H1 (cell line): ENCODE measurements at regions of chr11 and their contacts with region 1.

Region 1: DNA sequence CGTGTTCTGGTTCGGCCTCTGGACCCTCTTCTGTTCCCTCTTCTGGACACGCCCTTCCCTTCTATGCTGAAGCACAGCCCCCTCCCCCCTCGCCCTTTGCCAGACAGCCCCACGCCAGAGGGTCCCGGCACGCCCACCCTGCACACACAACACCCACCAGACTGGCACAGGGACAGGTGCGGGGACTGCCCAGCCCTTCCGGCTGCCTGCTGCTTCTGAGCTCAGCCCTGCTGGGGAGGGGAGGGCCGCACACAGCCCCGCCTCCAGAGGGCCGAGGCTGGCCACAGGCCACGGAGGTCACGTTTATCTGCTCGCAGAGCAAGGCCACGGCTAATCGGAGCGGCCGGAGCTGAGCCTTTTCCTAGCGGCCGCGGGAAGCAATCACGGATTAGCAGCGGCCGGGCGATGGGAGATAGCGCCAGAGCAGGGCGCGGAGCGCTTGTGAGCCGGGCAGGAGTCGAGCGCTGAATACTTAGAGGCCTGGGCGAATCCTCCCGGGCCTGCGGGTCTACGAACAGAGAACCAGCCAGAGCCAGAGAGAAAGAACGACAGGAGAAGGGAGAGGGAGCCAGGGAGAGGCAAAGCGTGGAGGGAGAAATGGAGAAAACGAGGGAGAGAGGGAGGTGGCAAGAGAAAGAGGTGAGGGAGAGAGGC is 21.5 kb downstream of the OTUB1 start:
- DNase-seq: peak in 1 of 2 experiments; percentile 73
- H3K4me3 ChIP-seq: peak overlapping the region; percentile 21 to 57 (median 34); a peak in 7 of 8 replicates
- H3K27ac ChIP-seq: no peak overlapping the region
- H3K4me1 ChIP-seq: peaks cover 0 to 15% (median 10%) of the 10 kb centered on the region in 4 experiments; a peak in 5 of 7 replicates
- H3K27me3 ChIP-seq: peaks cover 28 to 89% (median 72%) of the 10 kb centered on the region in 4 experiments
- CTCF ChIP-seq: peak in 1 of 3 experiments; percentile 24; a peak in 1 of 4 replicates
- EP300 ChIP-seq: no peak
- POLR2A ChIP-seq: no peak
- RAD21 ChIP-seq: peak in 1 of 2 experiments; percentile 16; a peak in 1 of 4 replicates

Region 2: GRCh38 chr11:64021757-64022093 is 14.0 kb after region 1 on chr11:
- CTCF ChIA-PET with region 1: interaction called, 74 read pairs
- POLR2A ChIA-PET with region 1: interaction called, 12 read pairs
- DNase-seq: no peak
- H3K4me3 ChIP-seq: no peak overlapping the region
- H3K27ac ChIP-seq: no peak overlapping the region
- H3K4me1 ChIP-seq: peaks cover 3 to 44% (median 32%) of the 10 kb centered on the region in 4 experiments
- H3K27me3 ChIP-seq: peaks cover 0 to 16% (median 12%) of the 10 kb centered on the region in 4 experiments; a peak in 5 of 7 replicates
- CTCF ChIP-seq: peak in 1 of 3 experiments; percentile 5; a peak in 1 of 4 replicates
- EP300 ChIP-seq: no peak
- POLR2A ChIP-seq: no peak
- RAD21 ChIP-seq: peak in 1 of 2 experiments; percentile 11; a peak in 1 of 4 replicates